Dorsolateral prefrontal cortex (tissue), 120 donors: ENCODE measurements at regions of chr17 and their contacts with region 1.

Region 1: DNA sequence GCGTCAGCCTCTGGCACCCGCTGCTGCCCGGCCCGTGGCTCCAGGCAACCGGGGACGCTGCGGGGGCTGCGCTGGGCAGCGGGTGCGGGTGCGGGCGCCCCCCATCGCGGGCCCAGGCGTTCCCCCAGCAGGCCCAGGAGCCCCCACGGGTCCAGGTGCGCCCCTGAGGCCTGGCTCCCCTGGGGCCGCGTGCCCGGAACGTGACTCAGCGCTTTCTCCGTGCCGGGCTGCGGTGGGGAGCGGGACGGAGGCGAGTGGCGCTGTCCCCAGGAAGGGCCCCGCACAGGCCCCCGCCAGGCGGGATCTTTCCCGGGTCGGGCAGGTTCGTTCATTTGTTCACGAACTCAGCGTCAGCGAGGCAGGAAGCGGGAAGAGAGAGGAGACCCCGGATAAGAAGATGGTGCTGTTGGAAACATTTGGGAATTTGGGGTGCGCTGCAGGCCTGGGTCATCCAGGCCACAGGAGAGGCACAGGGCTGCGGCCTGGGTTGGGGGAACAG is 18.4 kb upstream of the EXOC7 start:
- DNase-seq: peak in 2 of 10 donors; percentile 26 to 58
- H3K4me3 ChIP-seq: peak overlapping the region; percentile 22 to 69 (median 55)
- H3K27ac ChIP-seq: peak overlapping the region in 19 of 59 donors; percentile 3 to 78 (median 41)
- H3K27me3 ChIP-seq: no peaks in the 10 kb centered on the region
- CTCF ChIP-seq: no peak

Region 2: GRCh38 chr17:76032073-76032779 is 89.8 kb before region 1 on chr17:
- intact Hi-C with region 1: loop called in 1 of 2 experiments (anchors 10 kb)
- DNase-seq: no peak
- H3K4me3 ChIP-seq: no peak overlapping the region
- H3K27ac ChIP-seq: no peak overlapping the region
- H3K27me3 ChIP-seq: no peaks in the 10 kb centered on the region
- CTCF ChIP-seq: peak in 8 of 56 donors; percentile 9 to 21 (median 16)

Region 3: GRCh38 chr17:76141212-76142038 is 19.4 kb after region 1 on chr17 and contains the start of gene FOXJ1:
- intact Hi-C with region 1: no loop called
- DNase-seq: peak; percentile 79 to 96 (median 92)
- H3K4me3 ChIP-seq: peak within 1 kb of the TSS; percentile 26 to 71 (median 52)
- H3K27ac ChIP-seq: peak within 1 kb of the TSS in 2 of 59 donors; percentile 13 to 27
- H3K27me3 ChIP-seq: peaks cover 0 to 40% (median 25%) of the 10 kb centered on the region in 45 donors
- CTCF ChIP-seq: peak in 3 of 56 donors; percentile 10 to 21 (median 13)
- total RNA-seq, gene FOXJ1: 0.39 to 24.1 (median 2.3) TPM

Region 4: GRCh38 chr17:76278952-76279741 is 157.2 kb after region 1 on chr17:
- intact Hi-C with region 1: loop called (anchors 2 kb)
- DNase-seq: peak; percentile 84 to 93 (median 89)
- H3K4me3 ChIP-seq: no peak overlapping the region
- H3K27ac ChIP-seq: peak overlapping the region in 1 of 59 donors; percentile 34
- H3K27me3 ChIP-seq: no peaks in the 10 kb centered on the region
- CTCF ChIP-seq: peak; percentile 86 to 100 (median 98)

Region 5: DNA sequence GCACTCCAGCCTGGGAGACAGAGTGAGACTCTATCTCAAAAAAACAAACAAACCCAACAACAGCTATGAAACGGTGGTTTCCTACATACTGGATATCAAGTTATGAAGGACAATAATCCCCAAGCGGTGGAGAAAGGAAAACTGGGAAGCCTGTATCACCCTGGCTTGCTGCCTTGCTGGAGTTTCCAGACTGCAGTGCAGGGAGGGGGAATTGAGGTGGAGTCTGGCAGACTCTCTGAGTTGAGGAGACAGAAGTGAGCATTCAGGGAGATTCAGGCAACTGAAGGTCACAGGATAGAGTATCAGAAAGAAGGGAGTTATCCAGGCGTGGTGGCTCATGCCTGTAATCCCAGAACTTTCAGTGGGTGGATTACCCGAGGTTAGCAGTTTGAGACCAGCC is 174.2 kb after region 1 on chr17:
- intact Hi-C with region 1: loop called in 1 of 2 experiments (anchors 5 kb)
- DNase-seq: no peak
- H3K4me3 ChIP-seq: no peak overlapping the region
- H3K27ac ChIP-seq: no peak overlapping the region
- H3K27me3 ChIP-seq: no peaks in the 10 kb centered on the region
- CTCF ChIP-seq: no peak